Activated CD8-positive, alpha-beta T cell treated with anti-CD3 and anti-CD28 coated beads for 36 hours (primary cell): ENCODE measurements at regions of chr17 and their contacts with region 1.

Region 1: GRCh38 chr17:64420143-64420971 is 28.6 kb upstream of the MILR1 start:
- DNase-seq: no peak
- ATAC-seq: peak; percentile 79
- H3K4me3 Mint-ChIP-seq: no peak overlapping the region
- H3K27ac Mint-ChIP-seq: no peak overlapping the region
- H3K4me1 Mint-ChIP-seq: no peaks in the 10 kb centered on the region
- H3K27me3 Mint-ChIP-seq: no peaks in the 10 kb centered on the region
- CTCF ChIP-seq: peak; percentile 87

Region 2: GRCh38 chr17:63946440-63947367 is 473.7 kb before region 1 on chr17:
- CTCF ChIA-PET with region 1: no interaction called
- POLR2A ChIA-PET with region 1: no interaction called
- intact Hi-C with region 1: no loop called
- DNase-seq: peak; percentile 74
- ATAC-seq: peak; percentile 92
- H3K4me3 Mint-ChIP-seq: peak overlapping the region; percentile 50
- H3K27ac Mint-ChIP-seq: peak overlapping the region; percentile 77
- H3K4me1 Mint-ChIP-seq: peaks cover 20% of the 10 kb centered on the region
- H3K27me3 Mint-ChIP-seq: no peaks in the 10 kb centered on the region
- CTCF ChIP-seq: peak; percentile 89

Region 3: DNA sequence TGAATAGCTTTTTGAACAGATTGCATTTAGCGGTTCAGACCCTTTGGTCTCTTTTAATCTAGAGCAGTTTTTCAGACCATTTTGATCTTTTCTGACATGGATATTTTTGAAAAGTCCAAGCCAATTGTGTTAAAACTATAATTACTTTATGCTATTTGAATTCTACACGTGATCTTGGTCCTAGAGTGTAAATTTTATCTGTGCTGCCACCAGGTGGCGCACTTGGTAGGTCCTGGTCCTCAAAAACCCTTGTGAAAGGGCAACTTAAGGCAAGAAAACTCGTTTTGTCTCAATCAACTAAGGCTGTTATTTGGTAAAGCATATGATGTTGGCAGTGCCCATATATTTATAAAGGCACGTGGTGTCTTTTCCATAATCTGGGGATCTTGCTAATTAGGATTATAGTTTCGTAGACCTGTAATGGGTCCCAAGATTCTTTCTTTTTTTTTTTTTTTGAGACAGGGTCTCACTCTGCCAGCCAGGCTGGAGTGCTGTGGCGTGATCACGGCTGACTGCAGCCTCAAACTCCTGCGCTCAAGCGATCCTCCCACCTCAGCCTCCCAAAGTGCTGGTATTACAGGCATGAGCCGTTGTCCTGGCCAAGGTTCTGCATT is 113.4 kb before region 1 on chr17:
- CTCF ChIA-PET with region 1: interaction called, 251 read pairs
- POLR2A ChIA-PET with region 1: no interaction called
- intact Hi-C with region 1: loop called (anchors 1 kb)
- DNase-seq: peak; percentile 85
- ATAC-seq: peak; percentile 69
- H3K4me3 Mint-ChIP-seq: no peak overlapping the region
- H3K27ac Mint-ChIP-seq: no peak overlapping the region
- H3K4me1 Mint-ChIP-seq: peaks cover 4% of the 10 kb centered on the region
- H3K27me3 Mint-ChIP-seq: no peaks in the 10 kb centered on the region
- CTCF ChIP-seq: peak; percentile 94

Region 4: GRCh38 chr17:64378890-64379354 is 41.4 kb before region 1 on chr17:
- CTCF ChIA-PET with region 1: interaction called, 29 read pairs
- POLR2A ChIA-PET with region 1: interaction called, 3 read pairs
- intact Hi-C with region 1: no loop called
- DNase-seq: no peak
- ATAC-seq: no peak
- H3K4me3 Mint-ChIP-seq: no peak overlapping the region
- H3K27ac Mint-ChIP-seq: peak overlapping the region; percentile 60
- H3K4me1 Mint-ChIP-seq: peaks cover 46% of the 10 kb centered on the region
- H3K27me3 Mint-ChIP-seq: no peaks in the 10 kb centered on the region
- CTCF ChIP-seq: no peak

Region 5: GRCh38 chr17:64437944-64438525 is 17.7 kb after region 1 on chr17:
- CTCF ChIA-PET with region 1: interaction called, 11 read pairs
- POLR2A ChIA-PET with region 1: no interaction called
- intact Hi-C with region 1: no loop called
- DNase-seq: no peak
- ATAC-seq: no peak
- H3K4me3 Mint-ChIP-seq: no peak overlapping the region
- H3K27ac Mint-ChIP-seq: no peak overlapping the region
- H3K4me1 Mint-ChIP-seq: peaks cover 17% of the 10 kb centered on the region
- H3K27me3 Mint-ChIP-seq: peaks cover 2% of the 10 kb centered on the region
- CTCF ChIP-seq: no peak

Region 6: GRCh38 chr17:64479650-64480049 is 59.3 kb after region 1 on chr17:
- CTCF ChIA-PET with region 1: interaction called, 34 read pairs
- POLR2A ChIA-PET with region 1: no interaction called
- intact Hi-C with region 1: no loop called
- DNase-seq: no peak
- ATAC-seq: no peak
- H3K4me3 Mint-ChIP-seq: no peak overlapping the region
- H3K27ac Mint-ChIP-seq: no peak overlapping the region
- H3K4me1 Mint-ChIP-seq: no peaks in the 10 kb centered on the region
- H3K27me3 Mint-ChIP-seq: no peaks in the 10 kb centered on the region
- CTCF ChIP-seq: no peak

Region 7: DNA sequence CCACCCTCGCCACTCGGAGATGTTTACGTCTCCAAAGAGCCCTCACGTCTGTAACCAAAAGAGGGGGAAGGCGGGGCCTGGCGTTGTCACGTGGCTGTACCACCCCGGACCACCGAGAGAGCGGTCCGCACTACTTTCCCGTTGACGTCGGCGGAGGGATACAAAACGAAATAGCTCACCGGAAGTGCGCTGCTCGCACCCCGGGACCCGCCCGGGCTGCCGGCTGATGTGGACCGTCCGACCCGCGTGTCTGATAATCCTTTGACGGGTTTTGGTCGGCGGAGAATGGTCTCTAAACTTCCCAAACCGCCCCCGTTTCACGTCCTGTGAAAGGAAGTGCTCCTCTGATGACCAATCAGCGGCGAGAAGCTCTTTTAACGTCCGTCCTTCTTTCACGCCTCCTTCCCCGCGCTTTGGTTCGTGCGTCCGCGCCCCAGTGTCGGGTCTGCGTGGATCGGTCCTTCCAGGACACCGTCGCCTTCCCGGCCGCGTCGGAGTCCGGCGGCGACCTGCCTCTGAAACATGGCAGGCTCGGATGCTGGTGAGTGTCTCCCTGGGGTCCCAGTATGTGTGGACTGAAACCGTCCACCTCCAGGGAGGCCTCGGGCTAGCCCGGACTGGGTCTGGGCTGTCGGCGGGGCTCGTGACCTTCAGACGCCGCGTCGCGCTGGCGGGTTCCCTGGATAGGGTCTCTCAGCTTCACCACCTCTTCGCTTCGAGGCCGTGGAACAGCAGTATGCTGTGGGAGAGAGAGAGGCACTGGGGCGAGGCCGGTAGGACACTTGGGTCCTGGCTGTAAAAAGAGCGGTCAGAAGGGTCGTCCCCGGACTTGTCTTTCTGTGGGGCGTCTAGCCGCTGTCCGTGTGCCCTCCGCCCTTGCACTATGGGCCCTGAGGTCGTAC is 86.5 kb after region 1 on chr17 and contains the start of gene CEP95:
- CTCF ChIA-PET with region 1: interaction called, 15 read pairs
- POLR2A ChIA-PET with region 1: interaction called, 3 read pairs
- intact Hi-C with region 1: no loop called
- DNase-seq: peak; percentile 98
- ATAC-seq: peak; percentile 70
- H3K4me3 Mint-ChIP-seq: peak within 1 kb of the TSS; percentile 91
- H3K27ac Mint-ChIP-seq: peak within 1 kb of the TSS; percentile 99
- H3K4me1 Mint-ChIP-seq: peaks cover 53% of the 10 kb centered on the region
- H3K27me3 Mint-ChIP-seq: no peaks in the 10 kb centered on the region
- CTCF ChIP-seq: no peak
- total RNA-seq, gene CEP95: 45.2 to 45.7 TPM

Region 8: DNA sequence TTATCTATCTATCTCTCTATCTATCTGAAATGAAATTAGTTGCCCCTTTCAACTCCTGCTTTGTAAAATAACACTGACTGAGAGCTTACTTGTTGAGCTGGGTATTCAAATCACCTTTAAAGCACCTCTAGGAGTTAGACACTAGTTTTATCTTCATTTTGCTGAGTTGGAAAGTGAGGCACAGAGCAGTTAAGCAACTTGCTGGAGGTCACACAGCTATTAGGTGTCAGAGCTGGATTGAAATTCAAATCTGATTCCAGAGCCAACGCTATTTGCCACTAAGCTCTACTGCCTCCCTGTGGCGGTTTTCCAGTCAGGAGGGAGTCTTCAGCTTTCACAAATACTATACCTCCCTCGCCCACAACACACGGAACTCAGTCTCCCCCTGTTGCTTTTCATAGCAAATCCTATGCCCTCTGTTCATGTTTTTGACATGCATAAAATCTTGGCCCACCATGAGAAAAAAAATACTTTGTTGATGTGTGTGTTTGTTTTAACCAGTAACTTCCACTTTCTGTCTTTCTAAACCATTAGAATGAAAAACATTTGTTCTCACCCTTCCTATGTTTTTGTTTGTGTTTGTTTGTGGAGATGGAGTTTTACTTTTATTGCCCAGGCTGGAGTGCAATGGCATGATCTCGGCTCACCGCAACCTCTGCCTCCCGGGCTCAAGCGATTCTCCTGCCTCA is 316.6 kb after region 1 on chr17:
- CTCF ChIA-PET with region 1: interaction called, 51 read pairs
- POLR2A ChIA-PET with region 1: no interaction called
- intact Hi-C with region 1: no loop called
- DNase-seq: peak; percentile 78
- ATAC-seq: peak; percentile 83
- H3K4me3 Mint-ChIP-seq: no peak overlapping the region
- H3K27ac Mint-ChIP-seq: no peak overlapping the region
- H3K4me1 Mint-ChIP-seq: peaks cover 23% of the 10 kb centered on the region
- H3K27me3 Mint-ChIP-seq: no peaks in the 10 kb centered on the region
- CTCF ChIP-seq: peak; percentile 80